HEK293 (cell line): ENCODE measurements at regions of chr1 and their contacts with region 1.

Region 1: DNA sequence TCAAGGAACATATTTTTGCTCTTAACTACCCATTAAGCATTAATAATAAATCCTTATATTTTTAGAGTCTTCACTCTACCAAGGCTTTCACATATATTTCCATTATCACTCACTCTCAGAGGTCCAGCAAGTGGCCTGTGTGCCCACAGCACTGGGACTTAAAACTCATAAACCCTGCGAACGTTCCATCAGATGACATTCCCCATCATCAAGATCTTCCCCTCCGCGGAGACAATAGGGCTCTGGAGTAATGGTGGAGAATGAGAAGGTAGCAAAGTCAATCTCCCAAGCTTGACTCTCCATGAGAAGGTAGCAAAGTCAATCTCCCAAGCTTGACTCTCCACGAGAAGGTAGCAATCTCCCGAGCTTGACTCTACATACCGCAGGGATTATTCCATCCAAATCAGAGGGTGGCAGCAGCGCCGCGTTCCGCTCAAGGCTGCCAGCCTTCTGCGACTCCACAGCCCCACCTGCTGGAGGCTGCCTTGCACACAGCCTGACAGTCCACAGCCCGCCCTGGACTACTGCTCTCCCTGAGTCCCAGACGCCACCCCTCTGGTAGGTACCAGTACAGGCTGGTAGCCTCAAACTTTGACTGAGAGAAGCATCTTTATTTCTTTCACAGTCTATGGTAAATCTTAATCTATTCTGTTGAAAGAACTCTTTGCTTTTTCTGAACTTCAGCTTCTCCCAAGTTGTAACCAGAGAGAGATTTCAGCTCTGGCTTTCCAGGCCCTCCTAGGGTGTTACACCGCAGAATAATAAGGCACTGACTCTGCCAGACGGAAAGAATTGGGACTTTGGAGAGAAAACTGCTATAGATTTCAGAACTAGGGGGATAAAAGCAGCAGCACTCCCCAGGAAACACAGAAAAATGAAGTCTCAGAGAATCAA is 26.4 kb upstream of the CTTNBP2NL start:
- H3K4me3 ChIP-seq: no peak overlapping the region
- H3K27ac ChIP-seq: no peak overlapping the region
- H3K4me1 ChIP-seq: no peaks in the 10 kb centered on the region
- CTCF ChIP-seq: peak; percentile 97

Region 2: GRCh38 chr1:112358798-112359408 is 10.7 kb before region 1 on chr1:
- CTCF ChIA-PET with region 1: interaction called, 68 read pairs
- POLR2A ChIA-PET with region 1: no interaction called
- H3K4me3 ChIP-seq: no peak overlapping the region
- H3K27ac ChIP-seq: no peak overlapping the region
- H3K4me1 ChIP-seq: no peaks in the 10 kb centered on the region
- CTCF ChIP-seq: peak; percentile 77

Region 3: GRCh38 chr1:112383759-112384356 is 14.2 kb after region 1 on chr1:
- CTCF ChIA-PET with region 1: interaction called, 18 read pairs
- POLR2A ChIA-PET with region 1: no interaction called
- H3K4me3 ChIP-seq: no peak overlapping the region
- H3K27ac ChIP-seq: no peak overlapping the region
- H3K4me1 ChIP-seq: no peaks in the 10 kb centered on the region
- CTCF ChIP-seq: no peak

Region 4: DNA sequence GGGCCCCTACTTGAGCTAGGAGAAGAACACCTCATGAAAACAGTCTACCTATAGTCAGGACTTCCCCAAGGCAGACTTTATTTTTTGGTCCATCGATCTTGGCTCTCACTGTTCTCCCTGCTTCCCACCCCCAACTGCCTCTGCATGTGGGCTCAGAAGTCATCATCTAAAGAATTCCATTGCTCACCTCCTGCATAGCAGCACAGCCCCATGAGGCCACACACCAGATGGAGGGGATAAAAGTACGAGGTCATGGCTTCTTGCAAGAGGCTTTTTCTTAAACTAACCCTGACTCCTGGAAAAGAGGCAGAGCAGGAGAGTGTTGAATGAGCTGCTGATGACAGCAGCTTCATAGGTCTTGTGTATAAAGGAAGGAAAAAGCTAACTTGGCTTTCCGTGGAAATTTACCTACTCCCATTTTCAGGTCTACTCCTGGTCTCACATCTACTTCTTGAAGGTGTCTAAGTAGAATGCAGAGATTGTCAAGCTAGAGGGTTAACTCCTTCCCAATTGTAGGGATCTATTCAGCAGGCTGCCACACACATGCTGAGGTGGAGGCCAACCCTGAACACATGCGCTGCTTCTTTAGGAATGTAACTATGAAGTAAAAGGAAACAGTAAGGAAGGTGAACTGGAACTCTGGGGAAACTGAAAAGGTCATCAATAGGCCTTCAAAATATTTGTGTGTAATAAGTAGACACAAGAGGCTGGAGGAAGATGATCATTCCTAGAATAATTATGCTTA is 157.8 kb after region 1 on chr1:
- CTCF ChIA-PET with region 1: no interaction called
- POLR2A ChIA-PET with region 1: no interaction called
- H3K4me3 ChIP-seq: no peak overlapping the region
- H3K27ac ChIP-seq: no peak overlapping the region
- H3K4me1 ChIP-seq: no peaks in the 10 kb centered on the region
- CTCF ChIP-seq: no peak